Panc1 (cell line): ENCODE measurements at regions of chr10 and their contacts with region 1.

Region 1: DNA sequence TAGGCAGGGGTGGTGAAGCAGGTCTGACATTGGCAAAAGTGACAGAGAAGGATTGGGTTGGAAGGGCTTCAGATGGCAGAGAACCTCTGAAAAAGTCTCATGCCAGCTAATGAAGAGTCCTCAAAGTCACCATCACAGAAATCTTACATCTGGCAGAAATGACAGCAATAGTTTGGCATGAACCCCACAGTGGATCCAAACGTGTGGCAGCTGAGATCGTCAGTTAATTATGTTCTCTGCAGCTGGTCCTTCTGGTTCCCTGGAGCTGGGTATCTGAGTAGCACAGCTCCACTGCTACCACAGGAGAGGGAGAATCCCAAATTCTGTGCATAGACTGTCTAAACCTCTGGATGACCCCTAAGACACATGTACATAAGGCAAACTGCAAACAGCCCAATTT is 73.4 kb downstream of the ALOX5 start:
- DNase-seq: no peak
- ATAC-seq: no peak
- H3K4me3 ChIP-seq: no peak overlapping the region
- H3K27ac ChIP-seq: no peak overlapping the region
- H3K4me1 ChIP-seq: no peaks in the 10 kb centered on the region
- H3K27me3 ChIP-seq: no peaks in the 10 kb centered on the region
- CTCF ChIP-seq: no peak

Region 2: GRCh38 chr10:45325116-45325515 is 122.3 kb before region 1 on chr10:
- CTCF ChIA-PET with region 1: no interaction called
- POLR2A ChIA-PET with region 1: no interaction called
- in situ Hi-C with region 1: no loop called
- intact Hi-C with region 1: no loop called
- DNase-seq: no peak
- ATAC-seq: no peak
- H3K4me3 ChIP-seq: no peak overlapping the region
- H3K27ac ChIP-seq: no peak overlapping the region
- H3K4me1 ChIP-seq: no peaks in the 10 kb centered on the region
- H3K27me3 ChIP-seq: peaks cover 5% of the 10 kb centered on the region; the same call in 1 of the 2 replicates
- CTCF ChIP-seq: no peak

Region 3: DNA sequence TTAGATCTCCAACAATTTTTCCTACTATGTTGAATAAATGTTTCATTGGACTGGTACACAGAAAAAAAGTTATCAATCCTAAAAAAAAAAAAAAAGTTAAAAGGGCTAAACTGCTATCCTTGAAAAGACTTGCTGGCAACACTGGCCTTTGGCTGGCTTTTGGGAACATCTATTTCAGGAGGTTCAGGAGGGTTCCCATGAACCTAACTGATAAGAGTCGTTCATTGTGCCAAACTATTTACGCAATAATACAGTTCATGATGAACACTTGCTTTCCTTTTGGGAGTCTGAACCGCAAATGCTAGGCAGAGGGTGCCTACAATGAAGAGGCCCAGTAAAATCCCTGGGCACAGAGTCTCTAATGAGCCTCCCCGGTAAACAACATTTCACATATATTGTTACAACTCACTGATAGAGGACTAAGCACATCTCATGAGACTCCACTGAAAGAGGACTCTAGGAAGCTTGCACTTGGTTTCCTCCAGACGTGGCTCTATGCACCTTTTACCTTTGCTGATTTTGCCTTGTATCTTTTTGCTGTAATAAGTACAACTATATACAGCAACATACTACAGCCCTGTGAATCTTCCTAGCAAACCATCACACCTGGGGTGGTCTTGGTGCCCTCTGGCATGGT is 180.1 kb after region 1 on chr10:
- CTCF ChIA-PET with region 1: no interaction called
- POLR2A ChIA-PET with region 1: interaction called, 11 read pairs
- in situ Hi-C with region 1: no loop called
- intact Hi-C with region 1: no loop called
- DNase-seq: no peak
- ATAC-seq: no peak
- H3K4me3 ChIP-seq: no peak overlapping the region
- H3K27ac ChIP-seq: no peak overlapping the region
- H3K4me1 ChIP-seq: no peaks in the 10 kb centered on the region
- H3K27me3 ChIP-seq: no peaks in the 10 kb centered on the region
- CTCF ChIP-seq: no peak

Region 4: DNA sequence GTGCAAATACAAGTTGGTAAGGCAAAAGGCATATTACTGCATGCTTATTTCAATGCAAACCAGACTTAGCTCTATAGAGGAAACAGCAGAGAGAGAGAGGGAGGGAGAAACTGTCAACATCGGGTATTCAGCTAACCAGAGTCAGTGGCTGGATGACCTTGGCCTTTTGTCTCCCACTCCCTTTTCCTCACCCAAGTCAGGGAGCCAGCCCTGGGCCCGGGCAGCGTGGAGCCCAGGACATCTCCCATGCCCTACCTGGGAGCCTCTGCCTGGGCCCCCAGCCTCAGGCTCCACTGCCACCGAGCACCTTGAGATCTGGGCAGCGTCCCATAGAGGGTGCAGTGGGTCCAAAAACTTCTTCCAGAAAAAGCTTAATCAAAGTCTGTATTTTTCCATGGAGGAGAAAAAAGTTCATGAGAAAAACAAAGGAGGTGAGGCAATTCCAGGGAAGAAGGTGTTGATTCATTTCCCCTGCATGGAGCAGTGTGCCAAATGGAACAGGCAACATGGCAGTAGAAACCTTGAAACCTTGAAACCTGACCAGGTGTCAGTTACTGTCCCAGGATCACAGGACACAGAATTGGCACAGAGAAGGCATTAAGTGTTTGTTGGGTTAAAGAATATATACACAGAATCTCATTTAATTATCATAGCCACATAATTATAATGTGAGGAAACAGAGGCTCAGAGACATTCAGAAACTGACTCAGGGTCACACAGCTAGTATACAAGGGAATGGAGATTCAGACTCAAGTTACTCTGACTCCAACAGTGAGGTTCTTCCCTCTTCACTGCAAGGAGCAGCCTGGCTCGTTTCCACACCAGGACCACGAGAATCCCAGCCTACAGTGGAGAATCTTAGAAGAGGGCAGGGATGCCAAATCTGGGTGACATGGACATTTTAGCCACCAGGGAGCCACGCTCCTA is 588.8 kb after region 1 on chr10:
- CTCF ChIA-PET with region 1: no interaction called
- POLR2A ChIA-PET with region 1: no interaction called
- in situ Hi-C with region 1: no loop called
- intact Hi-C with region 1: no loop called
- DNase-seq: no peak
- ATAC-seq: 0 out of 2 replicates have a peak, but pooled peaks have one; percentile 54
- H3K4me3 ChIP-seq: no peak overlapping the region
- H3K27ac ChIP-seq: no peak overlapping the region
- H3K4me1 ChIP-seq: no peaks in the 10 kb centered on the region
- H3K27me3 ChIP-seq: no peaks in the 10 kb centered on the region
- CTCF ChIP-seq: peak; percentile 31